Colonic mucosa (tissue), 4 donors: ENCODE measurements at regions of chr22 and their contacts with region 1.

Region 1: GRCh38 chr22:33573479-33573878 is 346.8 kb downstream of the LARGE1 start:
- DNase-seq: no peak
- H3K4me3 ChIP-seq: no peak overlapping the region
- H3K27ac ChIP-seq: no peak overlapping the region
- H3K4me1 ChIP-seq: peaks cover 6% of the 10 kb centered on the region
- H3K27me3 ChIP-seq: no peaks in the 10 kb centered on the region
- CTCF ChIP-seq: no peak

Region 2: GRCh38 chr22:33593818-33594217 is 20.3 kb after region 1 on chr22:
- intact Hi-C with region 1: loop called (anchors 2 kb)
- DNase-seq: no peak
- H3K4me3 ChIP-seq: no peak overlapping the region
- H3K27ac ChIP-seq: no peak overlapping the region
- H3K4me1 ChIP-seq: no peaks in the 10 kb centered on the region
- H3K27me3 ChIP-seq: no peaks in the 10 kb centered on the region
- CTCF ChIP-seq: no peak

Region 3: DNA sequence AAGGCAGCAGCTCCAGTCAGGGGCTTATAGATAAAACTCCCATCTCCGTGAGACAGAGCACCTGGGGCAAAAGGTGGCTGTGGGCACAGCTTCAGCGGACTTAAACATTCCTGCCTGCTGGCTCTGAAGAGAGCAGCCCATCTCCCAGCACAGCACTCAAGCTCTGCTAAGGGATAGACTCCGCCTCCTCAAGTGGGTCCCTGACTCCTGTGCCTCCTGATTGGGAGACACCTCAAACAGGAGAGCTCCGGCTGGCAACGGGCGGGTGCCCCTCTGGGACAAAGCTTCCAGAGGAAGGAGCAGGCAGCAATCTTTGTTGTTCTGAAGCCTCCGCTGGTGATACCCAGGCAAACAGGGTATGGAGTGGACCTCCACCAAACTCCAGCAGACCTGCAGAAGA is 67.4 kb after region 1 on chr22:
- intact Hi-C with region 1: no loop called
- DNase-seq: no peak
- H3K4me3 ChIP-seq: no peak overlapping the region
- H3K27ac ChIP-seq: no peak overlapping the region
- H3K4me1 ChIP-seq: no peaks in the 10 kb centered on the region
- H3K27me3 ChIP-seq: no peaks in the 10 kb centered on the region
- CTCF ChIP-seq: no peak

Region 4: GRCh38 chr22:33726294-33726734 is 152.8 kb after region 1 on chr22:
- intact Hi-C with region 1: no loop called
- DNase-seq: no peak
- H3K4me3 ChIP-seq: no peak overlapping the region
- H3K27ac ChIP-seq: no peak overlapping the region
- H3K4me1 ChIP-seq: no peaks in the 10 kb centered on the region
- H3K27me3 ChIP-seq: no peaks in the 10 kb centered on the region
- CTCF ChIP-seq: no peak